ENCODE measurements at regions of chr5 and their contacts with region 1.

Region 1: DNA sequence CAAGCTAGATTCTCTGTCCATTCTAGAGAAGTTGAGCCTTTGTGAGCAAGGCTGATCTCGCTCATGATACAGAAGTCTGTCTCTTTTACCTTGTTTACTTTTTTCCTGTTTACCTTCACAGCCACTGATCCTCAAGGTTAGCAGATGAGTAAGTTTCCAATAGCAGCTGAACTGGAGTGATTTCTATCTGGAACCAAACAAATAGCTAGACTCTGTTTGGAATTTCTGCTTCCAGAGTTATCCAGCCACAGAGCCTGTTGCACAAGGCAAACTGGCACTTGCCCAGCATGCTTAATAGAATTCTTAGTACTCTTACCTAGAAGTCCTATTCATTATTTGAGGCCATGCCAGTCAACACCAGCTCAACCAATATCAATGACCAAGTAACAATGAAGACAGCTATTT is 12.8 kb upstream of the PANK3 start:
- DNase-seq: peak; percentile 59
- H3K4me3 Mint-ChIP-seq: no peak overlapping the region
- H3K27ac Mint-ChIP-seq: no peak overlapping the region
- H3K4me1 Mint-ChIP-seq: peaks cover 5% of the 10 kb centered on the region
- H3K27me3 Mint-ChIP-seq: peaks cover 20% of the 10 kb centered on the region
- CTCF ChIP-seq: no peak

Region 2: GRCh38 chr5:168612996-168613395 is 21.0 kb after region 1 on chr5:
- CTCF ChIA-PET with region 1: interaction called, 12 read pairs
- POLR2A ChIA-PET with region 1: no interaction called
- intact Hi-C with region 1: no loop called
- DNase-seq: no peak
- H3K4me3 Mint-ChIP-seq: no peak overlapping the region
- H3K27ac Mint-ChIP-seq: no peak overlapping the region
- H3K4me1 Mint-ChIP-seq: peaks cover 7% of the 10 kb centered on the region
- H3K27me3 Mint-ChIP-seq: no peaks in the 10 kb centered on the region
- CTCF ChIP-seq: no peak

Region 3: DNA sequence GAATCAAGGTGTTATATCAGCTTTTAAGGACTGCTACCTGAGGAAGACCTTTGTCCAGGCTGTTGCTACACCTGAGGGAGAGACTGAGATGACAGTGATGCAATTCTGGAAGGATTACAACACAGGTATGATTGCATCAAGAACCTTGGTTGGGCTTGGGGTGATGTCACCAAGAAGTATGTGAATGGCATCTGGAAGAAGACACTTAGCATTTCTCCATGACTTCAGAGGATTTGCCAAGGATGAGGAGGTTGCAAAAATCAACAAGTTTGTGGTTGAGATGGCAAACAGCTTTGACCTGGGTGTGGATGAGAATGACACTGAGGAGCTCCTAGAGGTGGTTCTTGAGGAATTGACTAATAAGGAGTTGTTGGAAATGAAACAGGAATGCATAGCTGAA is 55.1 kb after region 1 on chr5:
- CTCF ChIA-PET with region 1: no interaction called
- POLR2A ChIA-PET with region 1: interaction called, 16 read pairs
- intact Hi-C with region 1: no loop called
- DNase-seq: peak; percentile 99
- H3K4me3 Mint-ChIP-seq: peak overlapping the region; percentile 25
- H3K27ac Mint-ChIP-seq: peak overlapping the region; percentile 93
- H3K4me1 Mint-ChIP-seq: peaks cover 44% of the 10 kb centered on the region
- H3K27me3 Mint-ChIP-seq: no peaks in the 10 kb centered on the region
- CTCF ChIP-seq: no peak

Region 4: GRCh38 chr5:168654211-168654721 is 62.2 kb after region 1 on chr5:
- CTCF ChIA-PET with region 1: interaction called, 3 read pairs
- POLR2A ChIA-PET with region 1: interaction called, 11 read pairs
- intact Hi-C with region 1: no loop called
- DNase-seq: no peak
- H3K4me3 Mint-ChIP-seq: no peak overlapping the region
- H3K27ac Mint-ChIP-seq: no peak overlapping the region
- H3K4me1 Mint-ChIP-seq: peaks cover 44% of the 10 kb centered on the region
- H3K27me3 Mint-ChIP-seq: no peaks in the 10 kb centered on the region
- CTCF ChIP-seq: no peak

Measured in MCF 10A (cell line).